IMR-90 (cell line): ENCODE measurements at regions of chr19 and their contacts with region 1.

Region 1: DNA sequence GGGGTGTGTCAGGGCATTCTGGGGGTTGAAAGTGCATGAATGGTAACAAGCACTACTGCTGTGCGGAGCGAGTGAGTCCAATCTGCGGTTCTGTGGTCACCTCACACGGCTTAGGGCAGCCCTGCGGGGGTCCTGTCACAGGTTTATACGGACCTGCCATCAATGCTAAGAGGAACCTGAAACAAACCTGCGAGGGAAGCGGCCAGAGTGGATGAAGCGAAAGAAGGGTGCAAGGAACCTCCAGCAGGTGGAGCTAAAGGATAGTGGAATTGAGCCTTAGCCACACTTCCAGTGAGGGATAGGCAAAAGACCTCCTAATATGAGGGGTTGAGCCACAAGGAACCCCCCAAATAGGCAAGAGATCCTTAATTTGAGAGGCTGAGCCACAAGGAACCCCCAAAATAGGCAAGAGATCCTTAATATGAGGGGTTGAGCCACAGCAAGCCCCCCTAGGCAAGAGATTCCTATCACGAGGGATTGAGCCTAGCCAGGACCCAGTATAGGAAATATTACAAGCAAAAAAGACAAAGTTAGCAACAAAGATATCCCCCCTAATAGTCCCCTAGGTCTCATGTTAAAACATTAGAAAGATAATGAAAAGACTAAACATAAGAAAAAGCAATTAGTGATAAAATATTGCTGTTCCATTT is 6.3 kb upstream of the ZNF69 start:
- DNase-seq: peak; percentile 51
- ATAC-seq: peak; percentile 87
- H3K4me3 ChIP-seq: no peak overlapping the region
- H3K27ac ChIP-seq: no peak overlapping the region
- H3K4me1 ChIP-seq: no peaks in the 10 kb centered on the region
- H3K27me3 ChIP-seq: no peaks in the 10 kb centered on the region
- CTCF ChIP-seq: peak; percentile 70
- POLR2A ChIP-seq: no peak
- RAD21 ChIP-seq: peak; percentile 88

Region 2: GRCh38 chr19:11798391-11799330 is 82.6 kb before region 1 on chr19 and contains the start of gene ZNF491:
- CTCF ChIA-PET with region 1: no interaction called
- POLR2A ChIA-PET with region 1: no interaction called
- dilution Hi-C with region 1: no loop called
- in situ Hi-C with region 1: no loop called
- intact Hi-C with region 1: loop called (anchors 5 kb)
- DNase-seq: peak; percentile 87
- ATAC-seq: peak; percentile 99
- H3K4me3 ChIP-seq: peak within 1 kb of the TSS; percentile 76
- H3K27ac ChIP-seq: peak within 1 kb of the TSS; percentile 58
- H3K4me1 ChIP-seq: 0 out of 2 replicates have a peak, but pooled peaks cover 4% of the 10 kb centered on the region
- H3K27me3 ChIP-seq: no peaks in the 10 kb centered on the region
- CTCF ChIP-seq: peak; percentile 31
- POLR2A ChIP-seq: peak; percentile 52; the same call in 1 of the 2 replicates
- RAD21 ChIP-seq: no peak
- total RNA-seq, gene ZNF491: 3.6 and 4.2 TPM in 2 replicates

Region 3: DNA sequence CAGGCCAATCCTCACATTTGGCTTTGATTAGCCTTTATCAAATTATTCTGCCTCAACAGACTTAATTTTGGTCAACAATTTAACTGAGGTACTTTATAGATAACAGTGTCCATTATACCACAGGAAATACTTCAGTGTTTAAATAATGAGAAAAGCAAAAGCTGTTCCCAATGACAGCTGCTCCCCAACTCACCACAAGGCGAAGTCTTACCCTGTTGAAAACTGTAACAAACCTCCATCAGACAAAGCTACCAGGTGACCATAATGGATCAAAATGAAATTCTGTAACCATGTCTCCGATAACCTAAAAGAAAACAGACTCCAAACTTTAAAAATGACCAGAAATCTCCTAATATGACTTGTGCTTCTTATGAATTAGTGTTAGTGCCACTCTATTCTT is 363.1 kb after region 1 on chr19:
- CTCF ChIA-PET with region 1: no interaction called
- POLR2A ChIA-PET with region 1: no interaction called
- dilution Hi-C with region 1: no loop called
- in situ Hi-C with region 1: no loop called
- intact Hi-C with region 1: no loop called
- DNase-seq: no peak
- ATAC-seq: no peak
- H3K4me3 ChIP-seq: no peak overlapping the region
- H3K27ac ChIP-seq: no peak overlapping the region
- H3K4me1 ChIP-seq: no peaks in the 10 kb centered on the region
- H3K27me3 ChIP-seq: no peaks in the 10 kb centered on the region
- CTCF ChIP-seq: no peak
- POLR2A ChIP-seq: no peak
- RAD21 ChIP-seq: no peak